HEK293T (cell line): ENCODE measurements at regions of chr6 and their contacts with region 1.

Region 1: GRCh38 chr6:47477497-47478232 is at the start of gene CD2AP:
- DNase-seq: peak; percentile 91

Region 2: GRCh38 chr6:47091886-47092668 is 385.6 kb before region 1 on chr6:
- CTCF ChIA-PET with region 1: interaction called, 10 read pairs
- POLR2A ChIA-PET with region 1: no interaction called
- DNase-seq: no peak

Region 3: GRCh38 chr6:47396401-47397069 is 81.1 kb before region 1 on chr6:
- CTCF ChIA-PET with region 1: no interaction called
- POLR2A ChIA-PET with region 1: no interaction called
- DNase-seq: no peak

Region 4: DNA sequence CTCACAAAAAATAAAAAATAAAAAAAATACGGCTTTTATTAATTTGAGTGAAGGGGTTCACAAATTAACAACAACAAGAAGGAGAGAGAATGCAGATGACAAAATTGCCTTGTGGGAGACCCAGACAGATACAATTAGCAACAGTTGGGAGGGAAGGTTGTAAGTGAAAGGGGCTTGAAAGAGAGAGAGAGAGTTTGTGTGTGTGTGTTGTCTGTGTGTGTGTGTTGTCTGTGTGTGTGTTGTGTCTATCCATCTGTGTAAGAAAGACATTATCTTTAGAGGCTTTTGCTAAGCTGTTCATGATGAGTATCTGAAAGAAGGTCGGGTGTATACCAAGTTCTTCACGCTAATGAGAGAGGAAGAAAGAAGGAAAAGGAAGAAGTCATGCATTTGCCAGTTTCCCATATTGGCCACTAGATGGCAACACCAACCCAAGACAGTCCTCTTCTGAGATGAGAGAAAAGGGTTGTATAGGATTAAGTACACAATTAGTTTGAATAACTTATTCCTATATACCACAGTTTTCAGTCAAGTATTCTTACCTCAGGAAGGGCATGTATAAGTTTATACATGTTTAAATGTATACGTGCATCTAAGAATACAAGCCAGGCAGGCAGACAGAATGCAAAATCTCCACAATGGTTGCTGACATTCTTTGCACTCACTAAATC is 63.8 kb before region 1 on chr6:
- CTCF ChIA-PET with region 1: interaction called, 3 read pairs
- POLR2A ChIA-PET with region 1: interaction called, 16 read pairs
- DNase-seq: peak; percentile 60

Region 5: DNA sequence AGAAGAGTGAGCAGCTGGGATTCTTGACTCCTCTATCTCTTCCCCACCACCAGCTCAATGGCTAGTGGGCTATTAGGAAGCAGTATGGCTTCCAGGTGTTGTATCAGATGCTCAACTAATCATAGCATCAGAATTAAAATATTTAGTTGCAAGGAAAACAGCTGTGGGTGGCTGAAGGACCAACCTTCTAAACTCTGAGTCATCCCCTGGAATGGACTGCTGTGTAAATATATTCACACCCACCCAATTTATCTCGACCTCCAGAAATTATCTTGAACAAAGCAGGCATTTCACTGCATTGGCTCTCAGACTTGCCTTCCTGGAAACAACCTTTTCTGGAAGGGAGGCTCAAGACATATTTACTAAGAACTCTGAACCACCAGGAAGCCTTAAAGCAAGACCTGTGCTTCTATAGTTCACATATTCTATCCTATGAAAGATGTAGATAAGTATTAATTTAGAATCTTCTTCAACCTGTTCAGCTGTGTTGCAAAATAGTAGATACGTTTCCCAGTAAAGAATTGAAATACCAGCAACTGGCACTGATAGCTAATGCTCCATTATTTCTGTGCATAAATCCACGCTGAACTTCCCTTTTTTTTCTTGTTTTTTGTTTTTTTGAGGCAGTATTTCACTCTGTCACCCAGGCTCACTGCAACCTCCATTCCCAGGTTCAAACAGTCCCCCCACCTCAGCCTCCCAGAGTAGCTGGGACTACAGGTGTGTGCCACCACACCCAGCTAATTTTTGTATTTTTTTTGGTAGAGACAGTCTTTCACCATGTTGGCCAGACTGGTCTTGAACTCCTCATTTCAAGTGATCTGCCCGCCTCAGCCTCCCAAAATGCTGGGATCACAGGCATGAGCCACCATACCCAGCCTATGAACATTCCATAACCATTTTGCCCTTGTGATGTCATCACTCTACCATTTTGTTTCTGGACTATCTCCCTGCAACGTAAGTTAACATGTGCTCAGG is 57.0 kb before region 1 on chr6:
- CTCF ChIA-PET with region 1: no interaction called
- POLR2A ChIA-PET with region 1: interaction called, 11 read pairs
- DNase-seq: no peak

Region 6: GRCh38 chr6:47455534-47456209 is 22.0 kb before region 1 on chr6:
- CTCF ChIA-PET with region 1: interaction called, 3 read pairs
- POLR2A ChIA-PET with region 1: interaction called, 12 read pairs
- DNase-seq: no peak

Region 7: GRCh38 chr6:47464052-47464451 is 13.6 kb before region 1 on chr6:
- CTCF ChIA-PET with region 1: interaction called, 3 read pairs
- POLR2A ChIA-PET with region 1: interaction called, 12 read pairs
- DNase-seq: no peak